ENCODE measurements at regions of chr1 and their contacts with region 1.

Region 1: DNA sequence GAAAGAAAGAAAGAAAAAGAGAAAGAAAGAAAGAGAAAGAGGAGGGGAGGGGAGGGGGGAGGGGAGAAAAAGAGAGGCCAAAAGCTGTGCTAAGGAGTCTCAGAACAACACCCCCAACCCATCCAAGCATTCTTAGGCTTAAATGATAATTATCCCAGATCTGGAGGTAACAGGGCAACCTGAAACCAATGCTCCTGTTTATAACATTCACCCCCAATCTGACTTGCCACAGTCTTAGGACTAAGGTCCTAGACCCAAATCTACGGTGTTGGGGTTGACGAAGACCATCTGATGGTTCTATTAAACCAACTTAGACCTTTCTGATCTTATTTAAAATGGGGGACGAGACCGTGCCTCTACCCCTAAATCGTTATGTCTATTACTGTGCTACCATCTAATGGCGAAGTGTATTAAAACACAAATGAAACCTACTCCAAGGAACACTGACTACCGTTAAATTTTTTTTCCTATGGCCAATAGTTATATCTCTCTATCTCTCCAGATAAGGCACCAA is 119.3 kb upstream of the CDC42BPA start:
- DNase-seq: peak; percentile 83
- H3K4me3 Mint-ChIP-seq: peak overlapping the region; percentile 58
- H3K27ac Mint-ChIP-seq: peak overlapping the region; percentile 53
- H3K4me1 Mint-ChIP-seq: peaks cover 16% of the 10 kb centered on the region
- H3K27me3 Mint-ChIP-seq: no peaks in the 10 kb centered on the region
- CTCF ChIP-seq: peak; percentile 80

Region 2: GRCh38 chr1:227010645-227011044 is 426.9 kb before region 1 on chr1:
- CTCF ChIA-PET with region 1: interaction called, 3 read pairs
- POLR2A ChIA-PET with region 1: no interaction called
- intact Hi-C with region 1: loop called (anchors 10 kb)
- DNase-seq: no peak
- H3K4me3 Mint-ChIP-seq: no peak overlapping the region
- H3K27ac Mint-ChIP-seq: no peak overlapping the region
- H3K4me1 Mint-ChIP-seq: no peaks in the 10 kb centered on the region
- H3K27me3 Mint-ChIP-seq: no peaks in the 10 kb centered on the region
- CTCF ChIP-seq: no peak

Region 3: GRCh38 chr1:227192163-227192562 is 245.4 kb before region 1 on chr1:
- CTCF ChIA-PET with region 1: interaction called, 3 read pairs
- POLR2A ChIA-PET with region 1: no interaction called
- intact Hi-C with region 1: loop called (anchors 1 kb)
- DNase-seq: peak; percentile 90
- H3K4me3 Mint-ChIP-seq: no peak overlapping the region
- H3K27ac Mint-ChIP-seq: peak overlapping the region; percentile 73
- H3K4me1 Mint-ChIP-seq: peaks cover 9% of the 10 kb centered on the region
- H3K27me3 Mint-ChIP-seq: no peaks in the 10 kb centered on the region
- CTCF ChIP-seq: no peak

Region 4: GRCh38 chr1:227343727-227344551 is 93.6 kb before region 1 on chr1:
- CTCF ChIA-PET with region 1: interaction called, 6 read pairs
- POLR2A ChIA-PET with region 1: interaction called, 7 read pairs
- intact Hi-C with region 1: loop called (anchors 1 kb)
- DNase-seq: peak; percentile 96
- H3K4me3 Mint-ChIP-seq: peak overlapping the region; percentile 4
- H3K27ac Mint-ChIP-seq: peak overlapping the region; percentile 75
- H3K4me1 Mint-ChIP-seq: peaks cover 19% of the 10 kb centered on the region
- H3K27me3 Mint-ChIP-seq: no peaks in the 10 kb centered on the region
- CTCF ChIP-seq: no peak

Region 5: GRCh38 chr1:227363825-227364224 is 73.7 kb before region 1 on chr1:
- CTCF ChIA-PET with region 1: no interaction called
- POLR2A ChIA-PET with region 1: no interaction called
- intact Hi-C with region 1: no loop called
- DNase-seq: no peak
- H3K4me3 Mint-ChIP-seq: no peak overlapping the region
- H3K27ac Mint-ChIP-seq: no peak overlapping the region
- H3K4me1 Mint-ChIP-seq: no peaks in the 10 kb centered on the region
- H3K27me3 Mint-ChIP-seq: no peaks in the 10 kb centered on the region
- CTCF ChIP-seq: no peak

Region 6: DNA sequence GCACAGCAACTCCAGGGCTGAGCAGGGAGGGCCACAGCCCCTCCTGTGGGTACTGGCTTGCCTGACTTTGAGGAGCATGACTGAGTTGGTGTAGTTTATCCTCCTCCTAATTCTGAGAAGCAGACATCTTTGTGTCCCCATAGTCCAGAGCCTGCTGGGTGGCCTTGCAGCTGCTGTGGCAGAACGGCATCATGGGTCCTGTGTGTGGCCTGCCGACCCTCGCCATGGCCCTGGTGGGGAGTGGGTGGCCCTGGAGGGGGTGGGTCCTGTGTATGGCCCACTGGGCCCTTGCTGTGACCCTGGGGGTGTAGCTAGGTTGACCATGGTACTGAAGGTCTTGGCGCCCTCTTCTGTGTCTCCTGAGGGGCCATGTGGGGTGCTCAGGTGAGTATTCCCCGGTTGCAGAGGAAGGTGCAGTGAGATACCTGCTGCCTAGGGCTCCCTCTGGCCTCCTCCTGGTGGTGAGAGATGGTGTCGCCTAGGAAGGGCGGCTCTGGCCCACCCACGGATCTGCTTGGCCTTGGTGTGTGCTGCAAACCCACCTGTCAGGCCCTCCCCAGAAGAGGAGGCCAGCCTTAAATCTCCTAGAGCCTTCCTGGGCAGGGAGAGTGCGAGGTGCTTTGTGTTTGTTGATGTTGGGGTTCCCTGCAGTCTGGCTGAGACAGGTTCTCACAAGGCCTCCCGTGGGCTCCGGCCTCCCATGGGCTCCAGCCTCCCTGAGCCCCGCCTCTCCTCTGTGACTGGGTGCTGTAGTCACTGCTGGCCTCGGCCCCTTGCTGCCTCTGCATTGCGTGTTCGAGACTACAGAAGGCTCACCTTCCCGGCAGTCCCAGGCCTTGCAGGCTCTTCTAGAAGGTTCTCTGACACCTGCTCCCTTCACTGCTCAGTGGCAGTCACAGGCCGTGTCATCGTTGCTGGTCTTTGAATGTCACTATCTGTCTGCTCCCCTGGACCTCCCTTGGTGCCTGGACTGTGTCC is 305.5 kb after region 1 on chr1:
- CTCF ChIA-PET with region 1: no interaction called
- POLR2A ChIA-PET with region 1: no interaction called
- intact Hi-C with region 1: no loop called
- DNase-seq: no peak
- H3K4me3 Mint-ChIP-seq: no peak overlapping the region
- H3K27ac Mint-ChIP-seq: no peak overlapping the region
- H3K4me1 Mint-ChIP-seq: peaks cover 30% of the 10 kb centered on the region
- H3K27me3 Mint-ChIP-seq: no peaks in the 10 kb centered on the region
- CTCF ChIP-seq: no peak